Activated CD8-positive, alpha-beta T cell treated with anti-CD3 and anti-CD28 coated beads, Interleukin-2, amount 10 ng/mL, durations not matched to agents 7 days and 5 days (primary cell): ENCODE measurements at regions of chr14 and their contacts with region 1.

Region 1: GRCh38 chr14:93970549-93970946 is 5.8 kb downstream of the ASB2 start:
- DNase-seq: peak; percentile 75
- ATAC-seq: peak; percentile 76
- H3K4me3 Mint-ChIP-seq: peak overlapping the region; percentile 80
- H3K27ac Mint-ChIP-seq: peak overlapping the region; percentile 95
- H3K4me1 Mint-ChIP-seq: peaks cover 86% of the 10 kb centered on the region
- H3K27me3 Mint-ChIP-seq: no peaks in the 10 kb centered on the region

Region 2: DNA sequence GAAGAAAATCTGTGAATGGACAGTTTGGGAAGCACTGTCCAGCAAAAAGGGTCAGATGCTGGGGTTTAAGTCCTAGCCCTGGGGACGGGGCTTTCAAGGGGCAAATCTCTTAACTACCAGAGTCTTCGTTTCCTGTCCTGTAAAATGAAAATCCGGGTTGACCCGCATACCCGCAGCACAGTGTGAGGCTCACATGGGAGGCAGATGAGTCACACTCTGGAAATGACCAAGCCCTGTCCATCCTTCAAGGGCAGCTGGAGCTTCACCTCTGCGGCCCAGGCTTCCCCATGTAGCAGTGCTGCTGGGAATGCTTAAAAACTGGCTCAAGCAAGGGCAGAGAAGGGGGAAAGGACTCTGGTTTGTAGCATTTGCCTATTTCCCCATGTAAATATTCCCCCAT is 24.4 kb before region 1 on chr14:
- CTCF ChIA-PET with region 1: interaction called, 376 read pairs
- POLR2A ChIA-PET with region 1: interaction called, 3 read pairs
- DNase-seq: no peak
- ATAC-seq: no peak
- H3K4me3 Mint-ChIP-seq: no peak overlapping the region
- H3K27ac Mint-ChIP-seq: no peak overlapping the region
- H3K4me1 Mint-ChIP-seq: peaks cover 7% of the 10 kb centered on the region
- H3K27me3 Mint-ChIP-seq: no peaks in the 10 kb centered on the region

Region 3: DNA sequence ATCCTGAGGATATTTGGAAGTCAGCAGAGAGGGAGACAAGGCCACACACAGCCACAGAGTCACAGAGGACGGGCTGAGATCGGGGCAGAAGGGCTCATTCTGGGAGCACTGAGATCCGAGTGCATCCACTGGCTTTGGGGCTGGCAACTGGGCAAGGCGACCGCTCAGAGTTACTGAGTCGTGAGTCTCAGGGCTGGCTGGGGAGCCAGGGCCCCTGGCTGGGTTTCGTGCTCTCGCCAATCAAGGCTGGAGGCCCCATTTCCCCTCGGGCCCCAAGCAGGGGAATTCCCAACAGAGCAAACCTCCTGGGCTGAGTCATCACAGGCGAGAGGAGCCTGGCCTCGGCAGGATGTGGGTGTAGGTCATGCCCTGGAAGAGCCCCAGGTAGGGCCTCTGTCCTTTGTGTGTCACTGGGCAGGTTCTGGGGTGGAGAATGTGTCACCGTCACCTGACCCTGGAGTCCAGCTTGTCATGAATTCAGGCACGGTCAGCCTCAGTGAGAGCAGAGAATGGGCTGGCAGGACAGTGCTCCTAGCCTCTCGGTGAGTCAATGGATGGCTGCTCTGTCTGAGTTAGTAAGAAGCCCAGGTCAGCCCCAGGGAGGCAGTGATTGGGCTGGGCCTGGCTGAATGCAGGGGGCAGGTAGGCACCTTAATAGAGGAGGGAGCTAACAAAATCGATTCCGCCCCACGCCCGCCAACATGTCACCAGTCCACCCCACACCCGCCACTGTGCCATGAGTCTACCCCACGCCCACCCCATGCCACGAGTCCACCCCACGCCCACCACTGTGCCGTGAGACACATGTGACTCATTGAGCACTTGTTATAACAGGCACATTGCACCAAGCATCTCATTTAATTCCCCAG is 11.1 kb before region 1 on chr14:
- CTCF ChIA-PET with region 1: interaction called, 49 read pairs
- POLR2A ChIA-PET with region 1: interaction called, 303 read pairs
- DNase-seq: peak; percentile 95
- ATAC-seq: peak; percentile 76
- H3K4me3 Mint-ChIP-seq: peak overlapping the region; percentile 71
- H3K27ac Mint-ChIP-seq: peak overlapping the region; percentile 98
- H3K4me1 Mint-ChIP-seq: peaks cover 97% of the 10 kb centered on the region
- H3K27me3 Mint-ChIP-seq: no peaks in the 10 kb centered on the region

Region 4: DNA sequence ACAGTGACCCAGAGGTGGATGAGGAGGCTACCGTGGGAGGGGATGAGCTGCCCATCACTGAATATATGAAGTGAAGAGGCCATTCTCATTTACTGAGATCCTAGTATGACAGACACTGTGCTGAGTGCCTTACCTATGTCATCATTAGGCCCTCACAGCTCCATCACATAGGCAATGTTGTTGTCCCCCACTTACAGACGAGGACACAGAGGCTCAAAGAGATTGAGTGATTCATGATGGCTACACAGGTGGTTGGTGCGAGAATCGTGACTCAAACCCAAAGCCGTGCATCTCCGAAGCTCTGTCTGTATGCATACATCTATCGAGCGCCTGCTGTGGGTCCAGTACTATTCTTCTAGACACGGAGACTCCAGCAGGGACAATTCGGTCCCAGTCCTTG is 20.7 kb after region 1 on chr14:
- CTCF ChIA-PET with region 1: interaction called, 16 read pairs
- POLR2A ChIA-PET with region 1: interaction called, 4 read pairs
- DNase-seq: no peak
- ATAC-seq: no peak
- H3K4me3 Mint-ChIP-seq: no peak overlapping the region
- H3K27ac Mint-ChIP-seq: no peak overlapping the region
- H3K4me1 Mint-ChIP-seq: peaks cover 26% of the 10 kb centered on the region
- H3K27me3 Mint-ChIP-seq: no peaks in the 10 kb centered on the region

Region 5: GRCh38 chr14:94009767-94010166 is 39.2 kb after region 1 on chr14:
- CTCF ChIA-PET with region 1: interaction called, 25 read pairs
- POLR2A ChIA-PET with region 1: no interaction called
- DNase-seq: no peak
- ATAC-seq: no peak
- H3K4me3 Mint-ChIP-seq: no peak overlapping the region
- H3K27ac Mint-ChIP-seq: no peak overlapping the region
- H3K4me1 Mint-ChIP-seq: peaks cover 62% of the 10 kb centered on the region
- H3K27me3 Mint-ChIP-seq: peaks cover 15% of the 10 kb centered on the region